Endothelial cell of umbilical vein (primary cell): ENCODE measurements at regions of chr7 and their contacts with region 1.

Region 1: DNA sequence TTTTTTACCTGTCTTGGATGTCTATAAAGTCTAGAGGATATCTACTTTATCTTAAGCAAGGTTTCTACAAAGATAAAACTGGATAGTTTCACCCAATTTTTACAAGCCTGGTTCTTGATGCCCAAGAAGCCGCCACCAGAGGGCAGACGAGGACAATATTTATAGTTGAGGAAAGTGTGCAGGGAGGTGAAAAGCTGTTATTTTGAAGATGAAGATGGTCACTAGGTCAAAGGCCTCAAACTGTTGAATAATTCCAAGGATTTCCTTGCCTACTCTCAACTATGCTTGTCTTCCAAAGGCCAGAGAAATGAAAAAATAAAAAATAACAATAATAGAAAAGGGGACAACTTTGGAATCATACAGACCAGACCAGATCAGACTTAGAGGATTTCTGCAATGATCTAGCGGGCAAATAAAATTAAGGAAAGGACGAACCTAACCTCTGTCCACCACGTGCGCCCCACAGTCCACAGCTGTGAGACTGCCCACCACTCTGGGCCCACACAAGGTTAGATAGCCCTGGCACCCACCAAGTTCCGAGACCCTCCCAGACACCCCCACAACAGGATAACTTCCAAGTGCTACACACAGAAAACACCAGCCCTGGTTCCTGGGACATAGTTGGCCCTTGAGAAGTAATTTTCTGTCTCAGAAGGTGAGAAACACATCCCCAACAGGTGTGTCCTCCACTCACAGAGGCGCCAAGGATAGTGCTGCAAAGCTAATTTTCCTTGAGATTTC is 2.8 kb downstream of the PKD1L1 start:
- DNase-seq: peak; percentile 83
- H3K4me3 ChIP-seq: no peak overlapping the region
- H3K27ac ChIP-seq: peak overlapping the region; percentile 60
- H3K4me1 ChIP-seq: peaks cover 86% of the 10 kb centered on the region
- H3K27me3 ChIP-seq: no peaks in the 10 kb centered on the region
- CTCF ChIP-seq: peak; percentile 61 to 65
- POLR2A ChIP-seq: no peak

Region 2: GRCh38 chr7:46544374-46545008 is 1400.9 kb before region 1 on chr7:
- CTCF ChIA-PET with region 1: no interaction called
- POLR2A ChIA-PET with region 1: no interaction called
- dilution Hi-C with region 1: no loop called
- intact Hi-C with region 1: loop called (anchors 10 kb)
- DNase-seq: peak; percentile 72
- H3K4me3 ChIP-seq: no peak overlapping the region
- H3K27ac ChIP-seq: peak overlapping the region; percentile 96
- H3K4me1 ChIP-seq: peaks cover 26% of the 10 kb centered on the region
- H3K27me3 ChIP-seq: no peaks in the 10 kb centered on the region
- CTCF ChIP-seq: no peak
- POLR2A ChIP-seq: no peak

Region 3: GRCh38 chr7:47956220-47956619 is 10.8 kb after region 1 on chr7:
- CTCF ChIA-PET with region 1: interaction called, 12 read pairs
- POLR2A ChIA-PET with region 1: no interaction called
- dilution Hi-C with region 1: no loop called
- intact Hi-C with region 1: no loop called
- DNase-seq: no peak
- H3K4me3 ChIP-seq: no peak overlapping the region
- H3K27ac ChIP-seq: no peak overlapping the region
- H3K4me1 ChIP-seq: no peaks in the 10 kb centered on the region
- H3K27me3 ChIP-seq: no peaks in the 10 kb centered on the region
- CTCF ChIP-seq: no peak
- POLR2A ChIP-seq: no peak

Region 4: DNA sequence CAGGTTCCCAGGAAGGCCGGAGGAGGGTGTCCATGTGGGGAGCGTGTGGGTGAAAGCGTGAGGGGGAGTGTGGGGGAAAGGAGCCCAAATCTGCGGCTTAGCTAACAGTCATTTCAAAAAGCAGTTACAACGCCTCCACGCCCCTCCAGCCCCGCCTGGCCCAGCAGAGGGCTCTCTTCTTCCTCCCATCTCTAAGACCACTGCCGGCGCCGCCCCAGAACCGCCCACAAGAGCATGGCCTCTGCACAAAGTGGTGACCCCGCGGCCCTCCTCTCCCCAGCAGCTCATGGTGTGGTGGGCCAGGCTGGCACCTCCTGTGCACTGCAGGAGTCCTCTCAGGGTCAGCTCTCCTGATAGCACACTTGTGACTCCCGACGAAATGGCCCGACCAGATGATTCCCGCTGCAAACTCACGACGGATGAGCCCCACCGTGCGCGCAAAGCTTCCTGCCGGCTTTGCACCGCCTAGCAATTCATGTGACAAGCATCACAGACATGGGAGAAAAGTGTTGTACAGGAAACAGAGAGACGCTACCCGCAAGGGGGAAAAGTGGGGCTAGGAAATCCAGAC is 46.4 kb after region 1 on chr7:
- CTCF ChIA-PET with region 1: interaction called, 13 read pairs
- POLR2A ChIA-PET with region 1: no interaction called
- dilution Hi-C with region 1: no loop called
- intact Hi-C with region 1: loop called (anchors 1 kb)
- DNase-seq: peak; percentile 64
- H3K4me3 ChIP-seq: peak overlapping the region; percentile 27 to 47 (median 34)
- H3K27ac ChIP-seq: no peak overlapping the region
- H3K4me1 ChIP-seq: peaks cover 7% of the 10 kb centered on the region
- H3K27me3 ChIP-seq: no peaks in the 10 kb centered on the region
- CTCF ChIP-seq: peak; percentile 70 to 78
- POLR2A ChIP-seq: no peak

Region 5: GRCh38 chr7:48101968-48102367 is 156.5 kb after region 1 on chr7:
- CTCF ChIA-PET with region 1: interaction called, 149 read pairs
- POLR2A ChIA-PET with region 1: no interaction called
- dilution Hi-C with region 1: no loop called
- intact Hi-C with region 1: no loop called
- DNase-seq: no peak
- H3K4me3 ChIP-seq: no peak overlapping the region
- H3K27ac ChIP-seq: no peak overlapping the region
- H3K4me1 ChIP-seq: peaks cover 13% of the 10 kb centered on the region
- H3K27me3 ChIP-seq: no peaks in the 10 kb centered on the region
- CTCF ChIP-seq: peak; percentile 38 to 43
- POLR2A ChIP-seq: no peak

Region 6: DNA sequence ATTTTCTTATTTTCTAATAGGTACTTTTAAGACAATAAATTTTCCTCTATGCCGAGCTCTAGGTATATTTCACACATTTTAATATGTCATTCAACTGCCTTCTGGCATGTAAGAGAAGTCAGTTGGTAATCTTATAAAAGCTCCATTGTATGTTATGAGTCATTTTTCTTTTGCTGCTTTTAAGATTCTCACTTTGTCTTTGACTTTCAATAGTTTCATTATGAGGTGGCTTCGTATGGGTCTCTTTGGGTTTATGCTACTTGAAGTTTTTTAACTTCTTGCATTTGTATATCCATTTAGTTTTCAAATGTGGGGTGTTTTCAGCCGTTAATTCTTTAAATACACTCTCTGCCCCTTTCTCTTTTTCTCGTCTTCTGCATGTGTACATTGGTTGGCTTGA is 306.3 kb after region 1 on chr7:
- CTCF ChIA-PET with region 1: no interaction called
- POLR2A ChIA-PET with region 1: no interaction called
- dilution Hi-C with region 1: no loop called
- intact Hi-C with region 1: loop called (anchors 1 kb)
- DNase-seq: no peak
- H3K4me3 ChIP-seq: no peak overlapping the region
- H3K27ac ChIP-seq: no peak overlapping the region
- H3K4me1 ChIP-seq: peaks cover 29% of the 10 kb centered on the region
- H3K27me3 ChIP-seq: no peaks in the 10 kb centered on the region
- CTCF ChIP-seq: no peak
- POLR2A ChIP-seq: no peak